OCI-LY7 (cell line): ENCODE measurements at regions of chr20 and their contacts with region 1.

Region 1: GRCh38 chr20:47196091-47197081 is 160.1 kb downstream of the ZMYND8 start:
- DNase-seq: peak; percentile 87
- H3K4me3 ChIP-seq: peak overlapping the region; percentile 34
- H3K27ac ChIP-seq: no peak overlapping the region
- H3K4me1 ChIP-seq: peaks cover 4% of the 10 kb centered on the region
- CTCF ChIP-seq: peak; percentile 99

Region 2: DNA sequence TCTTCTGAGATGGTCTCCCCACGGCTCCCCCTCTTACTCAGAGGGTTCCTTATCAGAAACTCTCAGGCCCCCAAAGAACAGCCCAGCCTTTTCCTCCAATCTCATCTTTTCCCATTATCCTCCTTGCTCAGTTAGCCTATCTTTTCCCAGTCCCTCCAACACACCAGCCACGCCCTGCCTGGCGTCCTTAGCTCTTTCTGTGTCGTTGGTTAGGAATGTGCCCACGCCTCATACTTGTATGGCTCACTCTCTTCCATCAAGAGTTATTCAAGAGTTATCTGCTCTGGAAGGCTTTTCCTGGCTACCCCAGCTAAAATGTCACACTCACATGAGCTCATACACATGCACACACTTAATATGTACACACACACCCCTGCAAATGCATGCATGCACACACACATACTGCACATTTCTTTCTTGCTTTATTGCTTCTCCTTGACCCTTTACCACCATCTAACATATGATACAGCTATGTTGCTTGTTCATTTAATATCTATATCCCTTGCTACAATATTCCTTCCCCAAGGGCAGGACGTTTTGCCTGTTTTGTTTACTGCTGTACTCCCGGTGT is 449.3 kb before region 1 on chr20:
- CTCF ChIA-PET with region 1: no interaction called
- POLR2A ChIA-PET with region 1: no interaction called
- intact Hi-C with region 1: loop called (anchors 5 kb)
- DNase-seq: no peak
- H3K4me3 ChIP-seq: no peak overlapping the region
- H3K27ac ChIP-seq: no peak overlapping the region
- H3K4me1 ChIP-seq: no peaks in the 10 kb centered on the region
- CTCF ChIP-seq: no peak